HCT116 (cell line): ENCODE measurements at regions of chr5 and their contacts with region 1.

Region 1: DNA sequence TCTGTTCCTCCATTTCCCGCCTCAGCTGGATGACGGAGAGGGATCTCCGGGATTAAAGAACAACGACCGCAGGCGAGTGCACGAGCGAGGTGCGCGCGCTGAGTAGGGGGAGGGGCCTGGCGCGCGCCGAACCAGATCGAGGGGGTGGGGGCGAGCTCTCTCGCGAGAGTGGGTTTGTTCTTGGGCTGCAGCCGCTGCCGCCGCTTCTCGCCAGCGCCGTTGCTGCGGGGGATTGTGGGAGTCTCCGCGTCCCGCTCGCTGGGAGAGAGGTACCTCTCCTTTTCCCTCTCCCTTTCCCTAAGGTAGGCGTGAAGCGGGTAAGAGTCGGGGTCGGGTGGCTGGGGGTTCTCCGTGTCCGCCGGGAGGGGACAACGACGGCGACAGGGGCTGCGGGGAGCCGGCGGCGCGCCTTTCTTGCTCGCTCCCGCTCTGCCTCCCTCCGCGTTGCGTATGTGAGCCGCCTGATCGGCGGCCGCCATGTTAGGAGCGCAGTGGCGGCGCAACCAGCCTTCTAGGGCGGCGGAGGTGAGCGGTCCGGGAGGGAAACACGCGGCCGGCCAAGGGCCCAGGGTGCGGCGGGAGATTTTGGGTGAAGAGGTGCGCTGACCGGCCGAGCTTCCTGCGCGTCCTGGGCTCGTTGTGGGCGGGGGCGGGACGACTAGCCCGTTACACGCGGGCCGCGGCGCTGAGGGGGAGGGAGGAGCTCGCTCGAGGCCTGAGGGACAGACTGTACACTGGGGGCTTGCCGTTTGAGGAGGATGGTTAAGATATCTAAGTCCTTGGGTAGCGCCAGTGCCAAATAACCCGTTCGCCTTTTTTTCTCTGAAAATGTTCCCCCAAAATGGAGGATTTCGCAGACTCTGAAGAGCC is at the start of gene MATR3:
- DNase-seq: peak; percentile 91
- ATAC-seq: peak; percentile 85
- H3K4me3 ChIP-seq: peak within 1 kb of the TSS; percentile 69 to 76
- H3K27ac ChIP-seq: peak within 1 kb of the TSS; percentile 99
- H3K4me1 ChIP-seq: peaks cover 27 to 39% of the 10 kb centered on the region in 2 experiments
- H3K27me3 ChIP-seq: no peaks in the 10 kb centered on the region
- CTCF ChIP-seq: no peak
- POLR2A ChIP-seq: peak; percentile 81
- RAD21 ChIP-seq: no peak
- total RNA-seq, gene MATR3: 123 TPM

Region 2: GRCh38 chr5:138732466-138732865 is 561.3 kb before region 1 on chr5:
- CTCF ChIA-PET with region 1: no interaction called
- POLR2A ChIA-PET with region 1: no interaction called
- RAD21 ChIA-PET with region 1: no interaction called
- intact Hi-C with region 1: no loop called
- DNase-seq: no peak
- ATAC-seq: no peak
- H3K4me3 ChIP-seq: no peak overlapping the region
- H3K27ac ChIP-seq: no peak overlapping the region
- H3K4me1 ChIP-seq: no peaks in the 10 kb centered on the region
- H3K27me3 ChIP-seq: no peaks in the 10 kb centered on the region
- CTCF ChIP-seq: no peak
- POLR2A ChIP-seq: no peak
- RAD21 ChIP-seq: no peak

Region 3: GRCh38 chr5:139273572-139274289 is 20.0 kb before region 1 on chr5:
- CTCF ChIA-PET with region 1: no interaction called
- POLR2A ChIA-PET with region 1: interaction called, 20 read pairs
- RAD21 ChIA-PET with region 1: interaction called, 3 read pairs
- intact Hi-C with region 1: no loop called
- DNase-seq: peak; percentile 74
- ATAC-seq: peak; percentile 76
- H3K4me3 ChIP-seq: peak overlapping the region; percentile 87 to 89
- H3K27ac ChIP-seq: peak overlapping the region; percentile 86
- H3K4me1 ChIP-seq: peaks cover 44 to 68% of the 10 kb centered on the region in 2 experiments
- H3K27me3 ChIP-seq: no peaks in the 10 kb centered on the region
- CTCF ChIP-seq: no peak
- POLR2A ChIP-seq: peak; percentile 95
- RAD21 ChIP-seq: no peak

Region 4: DNA sequence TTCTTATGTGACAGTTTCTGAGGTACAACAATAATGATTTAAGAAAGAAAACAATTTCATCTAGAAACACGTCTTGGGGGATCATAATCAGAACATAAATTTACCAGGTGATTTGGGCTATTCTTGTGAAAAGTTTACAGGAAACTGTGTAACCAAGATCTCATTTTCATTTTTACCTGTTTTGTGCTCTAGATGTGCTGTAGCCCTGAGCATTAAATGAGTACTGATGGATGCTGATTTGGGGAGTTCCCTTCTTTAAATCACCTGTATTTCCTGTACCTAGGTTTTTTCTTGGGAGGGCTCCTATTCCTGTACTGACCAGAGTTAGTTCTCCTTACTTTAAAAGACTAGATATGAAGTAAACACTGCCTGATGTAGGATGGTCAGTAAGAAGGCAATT is 12.5 kb after region 1 on chr5:
- CTCF ChIA-PET with region 1: no interaction called
- POLR2A ChIA-PET with region 1: interaction called, 24 read pairs
- RAD21 ChIA-PET with region 1: no interaction called
- intact Hi-C with region 1: no loop called
- DNase-seq: no peak
- ATAC-seq: no peak
- H3K4me3 ChIP-seq: no peak overlapping the region
- H3K27ac ChIP-seq: no peak overlapping the region
- H3K4me1 ChIP-seq: peaks cover 25 to 73% of the 10 kb centered on the region in 2 experiments
- H3K27me3 ChIP-seq: no peaks in the 10 kb centered on the region
- CTCF ChIP-seq: no peak
- POLR2A ChIP-seq: no peak
- RAD21 ChIP-seq: no peak

Region 5: DNA sequence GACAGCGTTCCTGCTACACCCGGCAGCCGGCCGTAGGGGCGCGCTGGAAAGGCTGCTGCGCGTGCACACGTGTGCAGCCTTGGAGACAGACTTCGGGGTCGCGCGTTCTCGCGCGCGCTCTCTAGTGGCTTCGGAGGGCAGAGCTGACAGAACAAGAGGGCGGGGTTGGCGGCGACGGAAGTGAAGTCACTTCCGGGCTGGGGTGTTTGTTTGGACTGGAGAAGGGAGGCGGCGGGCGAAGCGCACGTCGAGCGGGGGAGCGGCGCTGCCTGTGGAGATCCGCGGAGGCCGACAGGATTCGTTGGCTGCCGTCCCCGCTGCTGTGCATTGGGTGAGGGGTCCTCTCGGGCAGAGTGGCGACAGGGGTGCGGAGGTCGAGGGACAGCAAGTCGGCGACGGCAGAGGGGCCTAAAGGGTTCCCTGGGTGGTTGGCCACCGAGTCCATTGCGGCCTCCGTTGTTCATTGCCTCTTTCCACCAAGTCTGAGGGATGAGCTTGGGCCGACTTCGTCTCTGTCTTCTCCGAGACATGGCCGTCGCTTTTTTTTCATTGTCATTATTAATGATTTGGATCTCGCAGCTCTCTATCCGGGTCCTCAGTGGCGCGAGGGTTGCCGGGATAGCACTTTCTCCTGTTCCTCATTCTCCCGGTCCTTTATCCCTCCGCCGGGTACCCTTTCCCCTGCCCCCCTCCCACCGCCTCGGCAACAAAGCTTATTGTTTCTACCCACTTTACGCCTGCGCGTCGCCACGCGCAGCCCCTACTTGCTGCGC is 48.1 kb after region 1 on chr5 and contains the start of gene PAIP2:
- CTCF ChIA-PET with region 1: interaction called, 6 read pairs
- POLR2A ChIA-PET with region 1: interaction called, 14 read pairs
- RAD21 ChIA-PET with region 1: no interaction called
- intact Hi-C with region 1: loop called (anchors 1 kb)
- DNase-seq: peak; percentile 96
- ATAC-seq: peak; percentile 91
- H3K4me3 ChIP-seq: peak within 1 kb of the TSS; percentile 83 to 88
- H3K27ac ChIP-seq: peak within 1 kb of the TSS; percentile 96
- H3K4me1 ChIP-seq: peaks cover 4 to 16% of the 10 kb centered on the region in 2 experiments; a peak in 3 of 4 replicates
- H3K27me3 ChIP-seq: no peaks in the 10 kb centered on the region
- CTCF ChIP-seq: peak; percentile 62 to 75 (median 72); a peak in 5 of 6 replicates
- POLR2A ChIP-seq: peak; percentile 66
- RAD21 ChIP-seq: peak; percentile 75
- total RNA-seq, gene PAIP2: 108 TPM

Region 6: DNA sequence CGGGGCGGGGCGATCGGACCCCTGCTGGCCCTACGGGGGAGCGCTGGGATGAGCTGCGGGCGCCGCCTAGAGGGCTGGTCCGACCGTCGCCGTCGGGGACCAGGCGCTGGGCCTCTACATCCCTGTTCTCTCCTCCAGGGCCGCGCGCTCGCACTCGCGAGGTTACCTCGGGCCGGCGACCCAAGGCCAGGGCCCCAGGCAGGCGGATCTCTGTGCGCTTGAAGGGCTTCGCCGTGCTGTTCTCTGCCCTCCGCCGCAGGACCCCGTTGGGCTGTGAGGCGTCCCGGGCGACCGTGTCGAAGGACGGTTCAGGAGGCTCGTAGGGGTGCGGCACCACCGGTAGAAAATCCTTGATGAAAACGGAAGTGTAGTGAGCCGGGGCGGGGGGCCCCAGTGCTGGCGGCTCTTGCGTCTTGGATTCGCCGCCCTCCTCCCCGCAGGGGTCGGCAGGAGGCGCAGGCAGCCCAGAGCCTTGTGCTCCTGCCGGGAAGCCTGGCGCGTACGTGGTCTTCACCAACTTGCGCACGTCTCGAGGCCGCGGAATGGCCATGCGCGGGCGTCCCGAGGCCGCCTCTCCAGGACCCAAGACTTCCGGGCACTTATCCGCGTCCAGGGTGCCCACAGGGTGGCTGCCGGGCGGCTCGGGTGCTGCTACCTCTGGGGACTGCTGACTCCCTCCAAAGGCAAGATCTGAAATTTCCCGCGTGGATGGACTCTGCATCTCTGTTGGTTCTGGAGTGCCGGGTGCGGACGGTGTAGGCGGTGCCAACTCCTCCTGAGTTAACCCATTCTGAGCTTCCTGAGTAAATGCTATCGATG is 99.1 kb after region 1 on chr5:
- CTCF ChIA-PET with region 1: no interaction called
- POLR2A ChIA-PET with region 1: interaction called, 4 read pairs
- RAD21 ChIA-PET with region 1: no interaction called
- intact Hi-C with region 1: loop called (anchors 2 kb)
- DNase-seq: peak; percentile 66
- ATAC-seq: peak; percentile 82
- H3K4me3 ChIP-seq: peak overlapping the region; percentile 65 to 79
- H3K27ac ChIP-seq: peak overlapping the region; percentile 82
- H3K4me1 ChIP-seq: peaks cover 15 to 56% of the 10 kb centered on the region in 2 experiments
- H3K27me3 ChIP-seq: no peaks in the 10 kb centered on the region
- CTCF ChIP-seq: peak in 2 of 3 experiments; percentile 76 to 81; a peak in 4 of 6 replicates
- POLR2A ChIP-seq: peak; percentile 16
- RAD21 ChIP-seq: no peak

Region 7: GRCh38 chr5:139560752-139561654 is 267.3 kb after region 1 on chr5 and contains the start of gene UBE2D2:
- CTCF ChIA-PET with region 1: no interaction called
- POLR2A ChIA-PET with region 1: no interaction called
- RAD21 ChIA-PET with region 1: no interaction called
- intact Hi-C with region 1: no loop called
- DNase-seq: peak; percentile 95
- ATAC-seq: peak; percentile 93
- H3K4me3 ChIP-seq: peak within 1 kb of the TSS; percentile 77 to 89
- H3K27ac ChIP-seq: peak within 1 kb of the TSS; percentile 93
- H3K4me1 ChIP-seq: peaks cover 8 to 38% of the 10 kb centered on the region in 2 experiments
- H3K27me3 ChIP-seq: no peaks in the 10 kb centered on the region
- CTCF ChIP-seq: no peak
- POLR2A ChIP-seq: no peak
- RAD21 ChIP-seq: no peak
- total RNA-seq, gene UBE2D2: 140 TPM

Region 8: DNA sequence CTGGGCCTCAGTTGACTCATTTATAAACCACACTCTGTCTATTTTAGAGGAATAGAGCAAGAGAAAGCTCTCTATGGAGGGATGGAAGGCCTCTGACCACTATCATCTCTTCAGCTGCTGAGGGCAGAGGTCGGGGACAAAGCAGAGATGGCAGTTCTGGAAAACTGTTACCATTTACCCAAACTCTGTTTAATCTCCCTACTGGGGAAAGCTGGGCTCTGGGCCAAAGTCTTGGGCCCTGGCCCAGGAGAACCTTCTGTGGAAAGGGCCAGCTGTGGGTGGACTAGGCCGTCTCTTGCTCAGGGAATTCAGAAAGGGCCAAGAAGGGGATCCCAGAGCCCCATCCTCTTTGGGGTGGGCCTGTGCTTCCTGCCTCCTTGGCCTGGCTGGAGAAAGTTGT is 601.9 kb after region 1 on chr5:
- CTCF ChIA-PET with region 1: no interaction called
- POLR2A ChIA-PET with region 1: no interaction called
- RAD21 ChIA-PET with region 1: no interaction called
- intact Hi-C with region 1: no loop called
- DNase-seq: no peak
- ATAC-seq: no peak
- H3K4me3 ChIP-seq: no peak overlapping the region
- H3K27ac ChIP-seq: no peak overlapping the region
- H3K4me1 ChIP-seq: no peaks in the 10 kb centered on the region
- H3K27me3 ChIP-seq: peaks cover 11% of the 10 kb centered on the region; the same call in 1 of the 2 replicates
- CTCF ChIP-seq: no peak
- POLR2A ChIP-seq: no peak
- RAD21 ChIP-seq: no peak